H1 (cell line): ENCODE measurements at regions of chr13 and their contacts with region 1.

Region 1: GRCh38 chr13:73262862-73263627 is 204.2 kb downstream of the KLF5 start:
- DNase-seq: no peak
- H3K4me3 ChIP-seq: no peak overlapping the region
- H3K27ac ChIP-seq: no peak overlapping the region
- H3K4me1 ChIP-seq: no peaks in the 10 kb centered on the region; a peak in 1 of 7 replicates
- H3K27me3 ChIP-seq: no peaks in the 10 kb centered on the region
- CTCF ChIP-seq: no peak
- EP300 ChIP-seq: no peak
- POLR2A ChIP-seq: no peak
- RAD21 ChIP-seq: no peak

Region 2: DNA sequence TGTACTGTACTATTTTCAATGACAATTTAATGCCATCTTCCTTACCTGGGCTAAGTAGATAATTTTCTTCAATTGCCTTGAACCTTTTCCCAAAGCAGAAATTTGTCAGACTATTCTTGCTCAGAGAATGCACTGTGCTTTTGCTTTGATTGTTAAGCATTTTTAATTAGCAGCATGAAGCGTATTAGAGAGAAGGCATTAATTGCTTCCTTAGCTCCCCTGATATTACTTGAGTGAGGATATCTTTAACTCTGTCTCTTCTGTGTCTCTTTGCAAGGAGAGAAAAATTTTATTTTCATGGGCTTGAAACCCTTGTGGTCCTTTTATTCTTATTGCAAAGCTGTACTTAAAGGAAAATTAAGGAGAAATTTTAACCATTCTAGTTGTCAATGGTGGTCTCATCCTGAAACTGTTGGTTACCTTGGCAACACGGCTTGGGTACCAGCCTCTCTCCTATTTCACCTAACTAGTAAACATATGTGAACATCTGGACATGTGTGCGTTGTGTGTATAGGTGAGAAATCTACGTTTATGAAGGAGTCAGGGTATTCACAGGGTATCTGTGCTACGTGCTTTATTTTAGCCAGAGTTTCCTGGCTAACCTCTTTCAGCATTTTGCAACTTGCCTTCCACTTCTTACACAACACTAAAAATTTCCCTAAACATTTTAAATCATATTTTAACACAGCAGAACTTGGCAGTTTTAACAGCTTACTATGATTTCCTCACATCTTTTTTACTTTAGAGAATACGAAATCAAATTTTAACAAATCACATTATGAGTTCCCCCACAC is 21.2 kb after region 1 on chr13:
- CTCF ChIA-PET with region 1: interaction called, 11 read pairs
- POLR2A ChIA-PET with region 1: no interaction called
- DNase-seq: no peak
- H3K4me3 ChIP-seq: no peak overlapping the region
- H3K27ac ChIP-seq: no peak overlapping the region
- H3K4me1 ChIP-seq: no peaks in the 10 kb centered on the region
- H3K27me3 ChIP-seq: no peaks in the 10 kb centered on the region
- CTCF ChIP-seq: no peak
- EP300 ChIP-seq: no peak
- POLR2A ChIP-seq: no peak
- RAD21 ChIP-seq: no peak

Region 3: GRCh38 chr13:73303851-73304250 is 40.8 kb after region 1 on chr13:
- CTCF ChIA-PET with region 1: no interaction called
- POLR2A ChIA-PET with region 1: no interaction called
- DNase-seq: peak in 1 of 2 experiments; percentile 13
- H3K4me3 ChIP-seq: no peak overlapping the region
- H3K27ac ChIP-seq: no peak overlapping the region
- H3K4me1 ChIP-seq: no peaks in the 10 kb centered on the region
- H3K27me3 ChIP-seq: no peaks in the 10 kb centered on the region
- CTCF ChIP-seq: no peak
- EP300 ChIP-seq: no peak
- POLR2A ChIP-seq: no peak
- RAD21 ChIP-seq: no peak